ENCODE measurements at regions of chr19 and their contacts with region 1.

Region 1: GRCh38 chr19:41563854-41564514 is 12.0 kb upstream of the CEACAM21 start:
- DNase-seq: peak; percentile 71
- ATAC-seq: peak; percentile 51
- H3K4me3 ChIP-seq: peak overlapping the region in 4 of 5 experiments; percentile 44 to 57 (median 52)
- H3K4me3 Mint-ChIP-seq: peak overlapping the region; percentile 90
- H3K27ac ChIP-seq: peak overlapping the region in 1 of 2 donors; percentile 39
- H3K27ac Mint-ChIP-seq: peak overlapping the region; percentile 72
- H3K4me1 ChIP-seq: peaks cover 30 to 33% of the 10 kb centered on the region in 2 donors
- H3K4me1 Mint-ChIP-seq: peaks cover 48% of the 10 kb centered on the region
- H3K27me3 ChIP-seq: peaks cover 0 to 12% (median 5%) of the 10 kb centered on the region in 4 experiments
- H3K27me3 Mint-ChIP-seq: peaks cover 7% of the 10 kb centered on the region
- CTCF ChIP-seq: no peak

Region 2: DNA sequence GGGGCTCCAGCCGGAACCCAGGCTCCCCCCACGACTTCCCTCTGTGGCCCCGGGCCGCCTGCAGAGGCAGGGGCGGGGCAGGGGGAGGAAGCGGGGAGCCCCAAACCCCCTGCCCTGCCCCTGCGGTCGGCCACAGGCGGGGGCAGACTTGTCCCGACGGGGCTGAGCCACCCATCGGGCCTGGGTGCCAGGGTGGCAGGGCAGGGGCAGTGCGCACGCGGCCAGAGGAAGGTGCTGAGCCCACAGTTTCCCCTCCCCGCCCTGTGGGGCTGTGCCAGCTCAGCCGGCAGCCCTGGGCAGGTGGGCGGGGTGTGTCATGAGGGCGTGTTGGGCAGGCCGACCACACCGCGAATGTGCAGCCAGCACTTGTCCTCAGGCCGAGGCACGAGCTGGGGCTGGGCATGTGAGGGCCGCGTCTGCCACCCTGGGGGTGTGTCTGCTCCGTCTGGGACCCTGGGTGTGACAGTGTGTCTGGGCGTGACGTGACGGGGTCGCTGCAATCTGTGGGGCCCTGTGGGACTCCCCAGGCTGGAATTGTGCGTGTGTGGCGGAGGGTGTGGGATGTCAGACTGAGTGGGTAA is 236.3 kb before region 1 on chr19:
- CTCF ChIA-PET with region 1: interaction called, 4 read pairs
- POLR2A ChIA-PET with region 1: no interaction called
- intact Hi-C with region 1: loop called (anchors 10 kb)
- DNase-seq: peak; percentile 90
- ATAC-seq: peak; percentile 78
- H3K4me3 ChIP-seq: peak overlapping the region; percentile 8 to 72 (median 39)
- H3K4me3 Mint-ChIP-seq: peak overlapping the region; percentile 88
- H3K27ac ChIP-seq: peak overlapping the region; percentile 76 to 97
- H3K27ac Mint-ChIP-seq: peak overlapping the region; percentile 98
- H3K4me1 ChIP-seq: peaks cover 59 to 80% of the 10 kb centered on the region in 2 donors
- H3K4me1 Mint-ChIP-seq: peaks cover 72% of the 10 kb centered on the region
- H3K27me3 ChIP-seq: no peaks in the 10 kb centered on the region
- H3K27me3 Mint-ChIP-seq: no peaks in the 10 kb centered on the region
- CTCF ChIP-seq: no peak

Region 3: DNA sequence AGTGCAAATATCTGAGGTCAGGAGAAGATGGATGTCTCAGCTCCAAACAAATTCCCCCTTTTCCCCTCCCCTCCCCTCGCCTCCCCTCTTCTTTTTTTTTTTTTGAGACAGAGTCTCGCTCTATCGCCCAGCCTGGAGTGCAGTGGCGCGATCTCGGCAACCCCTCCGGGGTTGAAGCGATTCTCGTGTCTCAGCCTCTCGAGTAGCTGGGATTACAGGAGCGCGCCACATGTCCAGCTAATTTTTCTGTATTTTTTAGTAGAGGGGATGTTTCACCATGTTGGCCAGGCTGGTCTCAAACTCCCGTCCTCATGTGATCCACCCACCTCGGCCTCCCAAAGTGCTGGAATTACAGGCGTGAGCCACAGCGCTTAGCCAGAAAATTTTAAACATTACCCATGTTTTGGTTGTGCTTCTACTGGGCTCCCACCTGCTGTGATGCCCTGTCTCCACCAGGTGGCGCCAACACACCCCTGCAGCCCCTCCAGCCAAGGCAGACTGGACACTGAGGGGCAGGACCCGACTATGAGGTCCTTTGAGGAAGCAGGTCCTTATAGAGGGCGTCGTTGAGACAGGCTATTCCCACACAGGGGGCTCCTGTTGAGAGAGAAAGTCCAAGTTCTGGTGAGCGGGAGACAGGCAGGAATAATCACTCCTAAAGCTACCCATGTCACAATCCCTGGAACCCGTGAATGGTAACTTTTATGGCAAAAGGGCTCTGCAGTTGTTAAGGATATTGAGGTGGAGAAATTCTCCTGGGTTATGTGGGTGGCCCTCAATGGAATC is 114.7 kb before region 1 on chr19:
- CTCF ChIA-PET with region 1: interaction called, 442 read pairs
- POLR2A ChIA-PET with region 1: interaction called, 4 read pairs
- intact Hi-C with region 1: loop called (anchors 1 kb)
- DNase-seq: peak; percentile 82
- ATAC-seq: peak; percentile 97
- H3K4me3 ChIP-seq: peak overlapping the region in 3 of 5 experiments; percentile 31 to 48 (median 35)
- H3K4me3 Mint-ChIP-seq: peak overlapping the region; percentile 74
- H3K27ac ChIP-seq: no peak overlapping the region
- H3K27ac Mint-ChIP-seq: peak overlapping the region; percentile 44
- H3K4me1 ChIP-seq: peaks cover 12 to 20% of the 10 kb centered on the region in 2 donors
- H3K4me1 Mint-ChIP-seq: peaks cover 20% of the 10 kb centered on the region
- H3K27me3 ChIP-seq: peaks cover 0 to 1% (median 0%) of the 10 kb centered on the region in 4 experiments
- H3K27me3 Mint-ChIP-seq: peaks cover 5% of the 10 kb centered on the region
- CTCF ChIP-seq: peak; percentile 99

Region 4: DNA sequence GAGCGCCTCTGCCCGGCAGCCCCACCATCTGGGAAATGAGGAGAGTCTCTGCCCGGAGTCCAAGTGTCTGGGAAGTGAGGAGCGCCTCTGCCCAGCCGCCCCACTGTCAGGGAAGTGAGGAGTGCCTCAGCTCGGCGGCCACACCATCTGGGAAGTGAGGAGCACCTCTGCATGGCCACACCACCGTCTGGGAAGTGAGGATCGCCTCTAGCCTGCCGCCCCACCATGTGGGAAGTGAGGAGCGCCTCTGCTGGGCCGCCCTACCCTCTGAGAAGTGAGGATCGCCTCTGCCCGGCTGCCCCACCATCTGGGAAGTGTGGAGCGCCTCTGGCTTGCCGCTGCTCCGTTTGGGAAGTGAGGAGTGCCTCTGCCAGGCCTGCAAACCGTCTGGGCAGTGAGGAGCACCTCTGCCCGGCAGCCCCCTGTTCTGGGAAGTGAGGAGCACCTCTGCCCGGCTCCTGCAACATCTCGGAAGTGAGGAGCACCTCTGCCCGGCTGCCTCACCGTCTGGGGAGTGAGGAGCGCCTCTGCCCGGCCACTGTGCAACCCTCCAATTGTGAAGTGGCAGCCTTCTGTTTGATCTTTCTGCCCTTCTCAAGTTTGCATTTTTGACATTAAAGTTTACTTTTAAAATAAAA is 48.9 kb before region 1 on chr19:
- CTCF ChIA-PET with region 1: interaction called, 9 read pairs
- POLR2A ChIA-PET with region 1: no interaction called
- intact Hi-C with region 1: loop called (anchors 1 kb)
- DNase-seq: no peak
- ATAC-seq: no peak
- H3K4me3 ChIP-seq: no peak overlapping the region
- H3K4me3 Mint-ChIP-seq: no peak overlapping the region
- H3K27ac ChIP-seq: no peak overlapping the region
- H3K27ac Mint-ChIP-seq: no peak overlapping the region
- H3K4me1 ChIP-seq: peaks cover 15 to 17% of the 10 kb centered on the region in 2 donors
- H3K4me1 Mint-ChIP-seq: peaks cover 18% of the 10 kb centered on the region
- H3K27me3 ChIP-seq: peaks cover 0 to 5% (median 2%) of the 10 kb centered on the region in 4 experiments
- H3K27me3 Mint-ChIP-seq: peaks cover 11% of the 10 kb centered on the region
- CTCF ChIP-seq: no peak

Region 5: DNA sequence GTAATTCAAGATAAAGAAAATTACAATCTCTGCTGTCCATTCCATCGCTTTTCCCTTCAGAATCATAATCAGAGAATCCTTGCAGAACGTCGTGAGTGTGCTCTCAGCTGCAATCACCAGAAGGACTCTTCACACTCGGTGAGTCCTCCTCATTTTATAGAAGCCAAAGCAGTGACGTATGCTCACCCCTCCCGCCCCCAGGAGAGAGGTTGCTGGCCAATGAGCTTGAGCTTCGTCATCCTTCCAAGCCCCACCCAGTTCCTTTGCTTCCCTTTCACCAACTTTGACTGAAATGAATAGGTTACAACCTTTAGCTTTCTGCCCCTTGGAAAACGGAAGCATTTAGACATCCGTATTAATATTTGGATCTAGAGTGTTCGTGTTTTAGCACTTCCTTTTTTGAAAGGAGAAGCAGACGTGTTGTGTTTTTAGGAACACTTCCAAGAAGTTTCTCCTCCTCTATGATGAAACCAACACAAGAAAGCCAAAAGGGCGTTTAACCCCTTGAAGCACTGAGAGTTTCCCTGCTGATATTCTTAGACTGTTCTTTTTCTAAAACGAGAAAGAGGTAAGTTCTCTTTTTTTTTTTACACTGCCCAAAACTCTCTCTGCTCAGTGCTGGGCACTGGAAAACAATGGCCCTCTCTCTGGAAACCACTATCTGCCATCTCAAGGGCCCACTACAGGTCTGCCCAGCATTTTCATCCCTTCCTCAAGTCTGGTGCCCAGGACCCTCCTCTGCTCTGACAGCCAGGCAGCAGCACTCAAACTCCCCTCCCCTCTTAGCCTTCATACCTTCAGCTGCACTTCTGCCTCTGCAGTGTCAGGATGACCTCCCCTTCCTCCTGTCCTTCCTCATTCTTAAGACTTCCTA is 32.3 kb before region 1 on chr19:
- CTCF ChIA-PET with region 1: interaction called, 549 read pairs
- POLR2A ChIA-PET with region 1: interaction called, 9 read pairs
- intact Hi-C with region 1: no loop called
- DNase-seq: peak; percentile 92
- ATAC-seq: peak; percentile 79
- H3K4me3 ChIP-seq: peak overlapping the region; percentile 37 to 67 (median 52)
- H3K4me3 Mint-ChIP-seq: peak overlapping the region; percentile 80
- H3K27ac ChIP-seq: peak overlapping the region; percentile 72 to 83
- H3K27ac Mint-ChIP-seq: peak overlapping the region; percentile 88
- H3K4me1 ChIP-seq: peaks cover 64 to 78% of the 10 kb centered on the region in 2 donors
- H3K4me1 Mint-ChIP-seq: peaks cover 83% of the 10 kb centered on the region
- H3K27me3 ChIP-seq: no peaks in the 10 kb centered on the region
- H3K27me3 Mint-ChIP-seq: no peaks in the 10 kb centered on the region
- CTCF ChIP-seq: no peak

Region 6: GRCh38 chr19:41548954-41549688 is 14.9 kb before region 1 on chr19:
- CTCF ChIA-PET with region 1: interaction called, 549 read pairs
- POLR2A ChIA-PET with region 1: interaction called, 17 read pairs
- intact Hi-C with region 1: loop called (anchors 1 kb)
- DNase-seq: peak; percentile 81
- ATAC-seq: peak; percentile 59
- H3K4me3 ChIP-seq: peak overlapping the region; percentile 63 to 98 (median 77)
- H3K4me3 Mint-ChIP-seq: peak overlapping the region; percentile 96
- H3K27ac ChIP-seq: peak overlapping the region; percentile 57 to 92
- H3K27ac Mint-ChIP-seq: peak overlapping the region; percentile 98
- H3K4me1 ChIP-seq: peaks cover 66 to 73% of the 10 kb centered on the region in 2 donors
- H3K4me1 Mint-ChIP-seq: peaks cover 71% of the 10 kb centered on the region
- H3K27me3 ChIP-seq: no peaks in the 10 kb centered on the region
- H3K27me3 Mint-ChIP-seq: no peaks in the 10 kb centered on the region
- CTCF ChIP-seq: no peak

Region 7: DNA sequence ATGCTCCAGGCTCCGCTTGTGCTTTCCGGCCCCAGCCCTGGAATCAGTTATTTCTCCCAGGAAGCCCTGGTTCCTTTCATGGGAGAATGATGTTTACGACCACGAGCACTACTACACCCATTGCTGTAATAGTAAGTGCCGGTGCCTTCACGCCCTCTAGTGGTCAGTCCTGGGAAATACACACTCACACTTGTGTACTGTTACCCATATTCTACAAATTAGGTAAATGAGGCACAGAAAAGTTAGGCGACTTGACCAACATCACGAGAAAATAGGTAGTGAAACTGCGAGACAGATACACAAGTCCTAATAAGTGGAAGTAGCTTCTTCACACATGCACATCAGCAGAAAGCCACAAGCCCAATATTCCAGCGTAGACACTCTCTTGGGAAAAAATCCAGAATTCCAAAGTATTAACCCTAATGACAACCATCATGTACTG is 33.6 kb after region 1 on chr19:
- CTCF ChIA-PET with region 1: interaction called, 18 read pairs
- POLR2A ChIA-PET with region 1: no interaction called
- intact Hi-C with region 1: loop called (anchors 5 kb)
- DNase-seq: peak; percentile 91
- ATAC-seq: peak; percentile 95
- H3K4me3 ChIP-seq: no peak overlapping the region
- H3K4me3 Mint-ChIP-seq: no peak overlapping the region
- H3K27ac ChIP-seq: no peak overlapping the region
- H3K27ac Mint-ChIP-seq: peak overlapping the region; percentile 42
- H3K4me1 ChIP-seq: peaks cover 0 to 19% of the 10 kb centered on the region in 2 donors
- H3K4me1 Mint-ChIP-seq: peaks cover 14% of the 10 kb centered on the region
- H3K27me3 ChIP-seq: peaks cover 0 to 3% (median 0%) of the 10 kb centered on the region in 4 experiments
- H3K27me3 Mint-ChIP-seq: peaks cover 12% of the 10 kb centered on the region
- CTCF ChIP-seq: peak; percentile 93

Region 8: GRCh38 chr19:41883821-41884733 is 320.1 kb after region 1 on chr19:
- CTCF ChIA-PET with region 1: no interaction called
- POLR2A ChIA-PET with region 1: no interaction called
- intact Hi-C with region 1: no loop called
- DNase-seq: peak; percentile 95
- ATAC-seq: peak; percentile 78
- H3K4me3 ChIP-seq: peak overlapping the region; percentile 83 to 100 (median 97)
- H3K4me3 Mint-ChIP-seq: peak overlapping the region; percentile 93
- H3K27ac ChIP-seq: peak overlapping the region; percentile 72 to 87
- H3K27ac Mint-ChIP-seq: peak overlapping the region; percentile 98
- H3K4me1 ChIP-seq: peaks cover 72 to 83% of the 10 kb centered on the region in 2 donors
- H3K4me1 Mint-ChIP-seq: peaks cover 78% of the 10 kb centered on the region
- H3K27me3 ChIP-seq: no peaks in the 10 kb centered on the region
- H3K27me3 Mint-ChIP-seq: no peaks in the 10 kb centered on the region
- CTCF ChIP-seq: no peak